Ascending aorta (tissue), 2 donors: ENCODE measurements at regions of chr3 and their contacts with region 1.

Region 1: GRCh38 chr3:77825001-77825827 is 785.3 kb downstream of the ROBO2 start:
- DNase-seq: peak; percentile 14 to 64
- H3K4me3 ChIP-seq: no peak overlapping the region
- H3K27ac ChIP-seq: no peak overlapping the region
- H3K4me1 ChIP-seq: no peaks in the 10 kb centered on the region
- H3K27me3 ChIP-seq: no peaks in the 10 kb centered on the region
- CTCF ChIP-seq: no peak

Region 2: DNA sequence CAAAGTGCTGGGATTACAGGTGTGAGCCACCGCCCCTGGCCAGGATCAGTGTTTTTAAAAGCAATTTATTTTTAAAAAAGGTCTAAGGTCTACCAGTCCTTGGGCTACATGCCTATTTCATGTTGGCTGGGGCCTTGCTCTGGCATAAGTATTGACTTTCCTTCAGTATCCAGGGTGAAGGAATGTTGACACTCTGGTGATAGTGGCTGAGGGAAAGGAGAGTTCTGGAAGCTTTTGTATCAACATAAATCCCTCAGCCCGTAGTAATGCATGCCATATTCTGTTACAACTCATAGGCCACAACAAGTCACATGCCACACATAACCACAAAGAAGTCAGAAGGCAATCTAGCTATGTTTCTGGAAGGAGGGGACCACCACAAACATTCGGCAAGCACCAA is 511.4 kb before region 1 on chr3:
- intact Hi-C with region 1: loop called (anchors 5 kb)
- DNase-seq: no peak
- H3K4me3 ChIP-seq: no peak overlapping the region
- H3K27ac ChIP-seq: no peak overlapping the region
- H3K4me1 ChIP-seq: no peaks in the 10 kb centered on the region
- H3K27me3 ChIP-seq: no peaks in the 10 kb centered on the region
- CTCF ChIP-seq: no peak